PC-9 (cell line): ENCODE measurements at regions of chr7 and their contacts with region 1.

Region 1: GRCh38 chr7:122975341-122975740 is 20.2 kb downstream of the TAS2R16 start:
- DNase-seq: peak in 1 of 2 experiments; percentile 12
- H3K4me3 ChIP-seq: no peak overlapping the region
- H3K27ac ChIP-seq: no peak overlapping the region
- H3K4me1 ChIP-seq: no peaks in the 10 kb centered on the region
- H3K27me3 ChIP-seq: no peaks in the 10 kb centered on the region
- CTCF ChIP-seq: no peak

Region 2: DNA sequence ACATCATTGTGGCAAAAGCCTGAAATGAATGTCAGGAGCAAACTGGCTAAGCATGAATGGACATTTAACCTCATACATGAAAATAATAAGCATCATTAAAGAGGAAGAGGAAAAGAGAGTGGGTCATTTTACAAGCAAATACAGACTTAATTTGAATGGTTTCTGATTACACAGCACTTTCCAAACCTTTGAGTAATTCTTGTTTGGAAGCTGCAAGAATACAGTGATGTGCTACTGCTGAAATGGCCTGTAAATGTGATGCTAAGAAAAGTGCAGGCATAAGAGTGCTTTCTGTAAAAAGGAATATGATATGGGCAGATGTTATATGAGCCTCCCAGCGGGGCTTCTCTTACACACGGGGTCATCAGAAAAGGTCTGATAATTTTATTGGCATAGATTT is 10.0 kb before region 1 on chr7:
- CTCF ChIA-PET with region 1: no interaction called
- POLR2A ChIA-PET with region 1: interaction called, 11 read pairs
- intact Hi-C with region 1: no loop called
- DNase-seq: no peak
- H3K4me3 ChIP-seq: no peak overlapping the region
- H3K27ac ChIP-seq: no peak overlapping the region
- H3K4me1 ChIP-seq: no peaks in the 10 kb centered on the region
- H3K27me3 ChIP-seq: no peaks in the 10 kb centered on the region
- CTCF ChIP-seq: no peak